ENCODE measurements at regions of chr16 and their contacts with region 1.

Region 1: DNA sequence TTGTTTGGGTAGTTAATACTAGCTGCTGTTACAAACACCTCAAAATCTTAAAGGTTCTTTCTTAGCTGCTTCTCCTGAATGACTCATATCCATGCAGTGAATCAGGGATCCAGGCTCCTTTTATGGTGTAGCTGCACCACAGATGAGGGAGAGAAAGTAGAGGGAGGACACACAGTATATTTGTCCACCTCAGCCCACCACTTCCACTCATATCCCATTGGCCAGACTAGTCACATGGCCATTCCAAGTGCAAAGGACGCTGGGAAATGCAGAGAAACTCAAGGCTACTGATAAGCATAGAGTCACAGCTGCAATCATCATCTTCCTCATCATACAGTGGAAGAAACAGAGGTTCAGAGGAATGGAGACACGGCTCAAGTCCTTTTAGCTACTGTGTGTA is 63.8 kb downstream of the GSG1L start:
- DNase-seq: no peak
- H3K4me3 Mint-ChIP-seq: no peak overlapping the region
- H3K27ac Mint-ChIP-seq: no peak overlapping the region
- H3K4me1 Mint-ChIP-seq: no peaks in the 10 kb centered on the region
- H3K27me3 Mint-ChIP-seq: peaks cover 65% of the 10 kb centered on the region
- CTCF ChIP-seq: no peak

Region 2: GRCh38 chr16:27920391-27920891 is 79.2 kb before region 1 on chr16:
- CTCF ChIA-PET with region 1: no interaction called
- intact Hi-C with region 1: loop called (anchors 10 kb)
- DNase-seq: peak; percentile 20
- H3K4me3 Mint-ChIP-seq: no peak overlapping the region
- H3K27ac Mint-ChIP-seq: no peak overlapping the region
- H3K4me1 Mint-ChIP-seq: no peaks in the 10 kb centered on the region
- H3K27me3 Mint-ChIP-seq: peaks cover 81% of the 10 kb centered on the region
- CTCF ChIP-seq: peak; percentile 25

Measured in Calu3 (cell line).